CD8-positive, alpha-beta T cell (primary cell): ENCODE measurements at regions of chr1 and their contacts with region 1.

Region 1: DNA sequence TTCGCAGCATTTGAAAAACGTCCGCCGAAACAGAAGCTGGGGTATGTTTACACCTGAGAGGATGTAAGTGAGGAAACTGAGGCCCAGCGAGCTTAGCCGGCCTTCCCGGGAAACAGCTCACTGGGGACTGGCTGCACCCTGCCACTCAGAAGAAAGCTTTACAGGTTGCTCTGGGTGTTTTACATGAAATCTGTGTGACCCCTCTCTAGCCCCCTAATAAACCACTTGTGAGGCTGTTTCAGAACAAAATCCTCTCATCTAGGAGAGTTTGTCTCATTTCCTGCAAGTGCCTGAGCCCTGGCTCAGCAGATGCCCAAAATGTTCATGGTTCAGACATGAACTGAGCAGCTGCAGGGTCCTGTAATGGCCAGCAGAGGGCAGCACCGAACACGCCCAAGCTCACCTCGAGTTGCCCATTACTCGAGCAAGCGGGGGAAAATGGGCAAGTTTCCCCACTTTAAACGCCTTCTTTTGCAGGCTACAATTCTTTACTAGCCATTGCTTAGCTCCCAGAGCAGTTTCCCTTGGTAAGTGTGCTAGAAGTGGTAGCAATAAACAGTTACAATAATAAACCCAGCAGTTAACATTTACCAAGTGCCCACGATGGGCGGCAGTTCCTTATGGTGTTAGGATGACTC is 76.4 kb downstream of the FHAD1 start:
- DNase-seq: peak; percentile 46 to 85 (median 75)
- ATAC-seq: peak; percentile 84
- H3K4me3 ChIP-seq: no peak overlapping the region
- H3K4me3 Mint-ChIP-seq: no peak overlapping the region
- H3K27ac ChIP-seq: no peak overlapping the region
- H3K27ac Mint-ChIP-seq: no peak overlapping the region
- H3K4me1 ChIP-seq: no peaks in the 10 kb centered on the region
- H3K4me1 Mint-ChIP-seq: peaks cover 2% of the 10 kb centered on the region
- H3K27me3 ChIP-seq: no peaks in the 10 kb centered on the region
- H3K27me3 Mint-ChIP-seq: no peaks in the 10 kb centered on the region
- CTCF ChIP-seq: peak; percentile 96

Region 2: DNA sequence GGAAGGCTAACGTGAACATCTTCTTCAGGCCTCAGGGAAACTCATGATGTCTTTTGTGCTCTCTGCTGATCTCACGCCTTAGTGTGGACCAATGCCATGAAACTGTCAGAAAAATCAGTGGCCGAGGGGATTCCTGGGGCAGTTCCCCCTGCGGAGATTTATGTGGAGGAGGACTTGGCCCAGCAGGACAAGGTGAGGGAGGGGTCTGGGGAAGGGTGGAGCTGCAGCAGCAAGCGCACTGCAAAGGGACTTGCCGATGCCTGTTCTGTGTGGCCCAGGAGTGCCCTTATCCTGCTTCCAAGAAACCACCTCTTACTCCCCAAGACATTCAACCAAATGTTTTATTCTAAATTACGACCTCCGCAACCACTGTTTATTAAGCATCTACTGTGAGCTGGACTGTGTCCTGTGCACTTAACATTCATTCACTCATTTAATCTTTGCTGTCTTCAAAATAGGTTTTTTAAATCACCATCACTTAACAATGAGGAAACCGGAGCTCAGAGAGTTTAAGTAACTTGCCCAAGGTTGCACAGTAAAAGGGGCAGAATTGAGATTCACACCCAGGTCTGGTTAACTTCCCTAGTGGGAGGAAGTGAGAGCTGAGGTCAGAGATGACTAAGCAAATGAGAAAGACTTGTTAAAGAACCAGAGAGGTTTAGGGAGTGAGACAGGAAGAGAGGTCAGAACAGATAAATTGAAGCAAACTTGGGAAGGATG is 26.7 kb before region 1 on chr1:
- CTCF ChIA-PET with region 1: no interaction called
- POLR2A ChIA-PET with region 1: no interaction called
- intact Hi-C with region 1: no loop called
- DNase-seq: peak in 2 of 9 experiments; percentile 17 to 49
- ATAC-seq: no peak
- H3K4me3 ChIP-seq: no peak overlapping the region
- H3K4me3 Mint-ChIP-seq: no peak overlapping the region
- H3K27ac ChIP-seq: no peak overlapping the region
- H3K27ac Mint-ChIP-seq: no peak overlapping the region
- H3K4me1 ChIP-seq: no peaks in the 10 kb centered on the region
- H3K4me1 Mint-ChIP-seq: peaks cover 3% of the 10 kb centered on the region
- H3K27me3 ChIP-seq: no peaks in the 10 kb centered on the region
- H3K27me3 Mint-ChIP-seq: peaks cover 3% of the 10 kb centered on the region
- CTCF ChIP-seq: no peak

Region 3: DNA sequence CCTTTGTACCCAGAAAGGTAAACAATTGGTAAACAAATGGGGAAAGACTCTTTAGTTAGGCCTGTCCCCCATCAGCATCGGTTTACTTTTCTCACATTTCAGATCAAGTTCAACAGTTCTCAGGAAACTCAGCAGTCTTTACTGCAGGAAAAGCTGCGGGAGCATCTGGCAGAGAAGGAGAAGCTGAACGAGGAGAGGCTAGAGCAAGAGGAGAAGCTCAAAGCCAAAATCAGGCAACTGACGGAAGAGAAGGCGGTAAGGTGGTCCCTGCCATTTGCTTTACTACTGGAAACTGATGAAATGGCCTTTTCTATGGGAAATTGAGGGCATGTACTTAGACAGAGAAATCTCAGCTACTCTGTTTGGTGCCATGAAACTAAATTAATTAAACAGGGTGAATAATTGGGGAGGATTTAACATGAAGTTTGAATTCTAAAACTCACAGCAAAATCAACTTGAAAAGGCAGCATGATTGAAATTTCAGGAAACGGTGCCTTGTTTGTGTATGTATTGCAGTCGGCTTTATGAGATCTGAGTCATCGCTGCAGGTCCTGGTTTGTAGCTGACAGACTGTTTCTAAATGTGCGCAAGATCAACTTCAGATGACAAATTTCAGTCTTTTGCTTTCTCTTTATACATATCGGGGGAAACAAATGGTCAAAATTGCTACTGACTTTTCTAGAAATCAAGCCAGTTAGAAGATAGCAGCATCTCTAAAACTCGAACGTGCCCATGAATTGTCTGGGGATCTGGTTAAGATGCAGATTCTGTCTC is 18.4 kb after region 1 on chr1:
- CTCF ChIA-PET with region 1: interaction called, 18 read pairs
- POLR2A ChIA-PET with region 1: no interaction called
- intact Hi-C with region 1: no loop called
- DNase-seq: peak in 2 of 9 experiments; percentile 57 to 65
- ATAC-seq: peak; percentile 51
- H3K4me3 ChIP-seq: no peak overlapping the region
- H3K4me3 Mint-ChIP-seq: no peak overlapping the region
- H3K27ac ChIP-seq: peak overlapping the region; percentile 30 to 64
- H3K27ac Mint-ChIP-seq: peak overlapping the region; percentile 35
- H3K4me1 ChIP-seq: peaks cover 21% of the 10 kb centered on the region
- H3K4me1 Mint-ChIP-seq: peaks cover 37% of the 10 kb centered on the region
- H3K27me3 ChIP-seq: peaks cover 0 to 3% of the 10 kb centered on the region in 2 experiments
- H3K27me3 Mint-ChIP-seq: peaks cover 22% of the 10 kb centered on the region
- CTCF ChIP-seq: no peak

Region 4: GRCh38 chr1:15384301-15384901 is 60.9 kb after region 1 on chr1:
- CTCF ChIA-PET with region 1: interaction called, 5 read pairs
- POLR2A ChIA-PET with region 1: no interaction called
- intact Hi-C with region 1: loop called in 1 of 2 experiments (anchors 10 kb)
- DNase-seq: peak in 2 of 9 experiments; percentile 31 to 46
- ATAC-seq: no peak
- H3K4me3 ChIP-seq: no peak overlapping the region
- H3K4me3 Mint-ChIP-seq: peak overlapping the region; percentile 61
- H3K27ac ChIP-seq: no peak overlapping the region
- H3K27ac Mint-ChIP-seq: no peak overlapping the region
- H3K4me1 ChIP-seq: peaks cover 9% of the 10 kb centered on the region
- H3K4me1 Mint-ChIP-seq: peaks cover 12% of the 10 kb centered on the region
- H3K27me3 ChIP-seq: no peaks in the 10 kb centered on the region
- H3K27me3 Mint-ChIP-seq: peaks cover 12% of the 10 kb centered on the region
- CTCF ChIP-seq: no peak

Region 5: GRCh38 chr1:15417365-15417934 is 94.0 kb after region 1 on chr1:
- CTCF ChIA-PET with region 1: interaction called, 28 read pairs
- POLR2A ChIA-PET with region 1: no interaction called
- intact Hi-C with region 1: no loop called
- DNase-seq: peak in 8 of 9 experiments; percentile 49 to 92 (median 63)
- ATAC-seq: peak; percentile 77
- H3K4me3 ChIP-seq: peak overlapping the region; percentile 2 to 21
- H3K4me3 Mint-ChIP-seq: peak overlapping the region; percentile 29
- H3K27ac ChIP-seq: peak overlapping the region in 1 of 2 experiments; percentile 80
- H3K27ac Mint-ChIP-seq: peak overlapping the region; percentile 89
- H3K4me1 ChIP-seq: peaks cover 45% of the 10 kb centered on the region
- H3K4me1 Mint-ChIP-seq: peaks cover 59% of the 10 kb centered on the region
- H3K27me3 ChIP-seq: no peaks in the 10 kb centered on the region
- H3K27me3 Mint-ChIP-seq: no peaks in the 10 kb centered on the region
- CTCF ChIP-seq: no peak

Region 6: DNA sequence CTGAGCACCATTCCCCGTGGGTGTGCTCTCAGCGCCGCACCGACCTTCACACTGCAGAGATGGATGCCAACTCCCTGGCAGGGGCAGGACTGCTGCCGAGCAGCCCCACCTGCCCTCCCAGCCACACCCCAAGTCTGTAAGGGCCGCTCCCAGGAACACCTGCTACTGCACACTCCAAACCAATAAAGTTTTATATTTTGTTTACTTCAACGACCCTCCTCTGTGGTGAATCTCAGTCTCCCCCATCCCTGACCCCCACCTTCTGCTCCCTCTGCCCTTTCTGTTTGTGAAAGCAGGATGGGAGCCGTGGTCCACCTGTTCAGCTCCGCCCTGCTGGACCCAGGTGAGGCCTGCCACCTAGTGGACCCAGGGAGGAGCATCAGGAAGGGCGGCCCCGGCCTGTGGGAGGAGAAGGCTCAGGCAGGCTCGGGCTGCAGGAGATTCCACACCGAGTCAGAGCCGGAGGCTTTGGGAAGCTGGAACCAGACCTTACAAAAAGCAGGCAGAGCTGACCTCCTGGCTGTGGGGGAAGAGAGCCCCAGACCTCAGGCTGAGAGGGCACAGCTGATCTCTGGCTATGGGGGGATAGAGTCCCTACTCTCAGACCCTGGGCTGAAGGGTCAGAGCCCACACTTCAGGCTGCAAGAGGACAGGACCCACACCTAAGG is 417.8 kb after region 1 on chr1:
- CTCF ChIA-PET with region 1: interaction called, 3 read pairs
- POLR2A ChIA-PET with region 1: no interaction called
- intact Hi-C with region 1: loop called in 1 of 2 experiments (anchors 5 kb)
- DNase-seq: peak; percentile 24 to 80 (median 63)
- ATAC-seq: peak; percentile 90
- H3K4me3 ChIP-seq: no peak overlapping the region
- H3K4me3 Mint-ChIP-seq: no peak overlapping the region
- H3K27ac ChIP-seq: no peak overlapping the region
- H3K27ac Mint-ChIP-seq: no peak overlapping the region
- H3K4me1 ChIP-seq: peaks cover 5% of the 10 kb centered on the region
- H3K4me1 Mint-ChIP-seq: peaks cover 3% of the 10 kb centered on the region
- H3K27me3 ChIP-seq: no peaks in the 10 kb centered on the region
- H3K27me3 Mint-ChIP-seq: no peaks in the 10 kb centered on the region
- CTCF ChIP-seq: peak; percentile 69